ENCODE measurements at regions of chr9 and their contacts with region 1.

Region 1: DNA sequence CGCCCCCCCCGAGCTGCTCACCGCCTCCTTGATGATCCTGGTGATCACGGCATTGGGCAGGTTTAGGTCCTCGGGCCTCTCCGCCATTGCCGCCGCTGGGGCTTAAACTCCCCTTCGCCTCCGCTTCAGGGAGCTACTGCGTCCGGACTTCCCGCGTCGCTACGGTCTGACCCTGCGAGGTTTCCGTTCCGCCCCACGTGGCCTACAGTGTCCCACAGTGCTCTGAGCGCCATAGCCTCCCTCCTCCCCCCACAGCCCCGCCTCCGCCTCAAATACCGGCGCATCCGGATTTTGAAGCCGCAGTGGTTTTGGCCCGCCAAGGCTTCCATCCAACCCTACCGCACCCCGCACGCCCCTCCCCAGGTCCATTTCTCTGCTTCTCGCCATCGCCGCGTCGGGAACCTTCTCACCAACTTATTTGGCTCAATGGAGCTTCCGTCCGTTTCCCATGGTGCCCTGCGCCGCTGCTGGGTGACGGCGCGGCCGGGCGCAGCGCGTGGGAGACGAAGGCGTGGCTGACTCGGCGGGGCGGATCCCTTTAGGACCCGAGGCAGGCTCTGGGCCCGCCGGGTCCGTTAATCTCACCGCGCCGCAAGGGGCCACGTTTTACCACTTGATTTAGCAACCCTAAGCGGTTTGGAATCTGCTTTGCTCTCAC is at the starts of genes C9orf43 and POLE3:
- DNase-seq: peak; percentile 88 to 99 (median 94)
- ATAC-seq: peak; percentile 88 to 89
- H3K4me3 Mint-ChIP-seq: peak within 1 kb of the TSS; percentile 94 to 99 (median 96)
- H3K27ac Mint-ChIP-seq: peak within 1 kb of the TSS; percentile 98 to 100 (median 99)
- H3K4me1 Mint-ChIP-seq: peaks cover 20 to 39% (median 36%) of the 10 kb centered on the region in 4 donors
- H3K27me3 Mint-ChIP-seq: peaks cover 0 to 3% (median 0%) of the 10 kb centered on the region in 5 donors
- polyA plus RNA-seq, gene C9orf43: 0.55 to 0.81 TPM in 2 of 3 donors, not detected in the other
- polyA plus RNA-seq, gene POLE3: 116 to 138 (median 125) TPM

Region 2: GRCh38 chr9:113275157-113276131 is 134.9 kb before region 1 on chr9 and contains the starts of genes CDC26 and PRPF4:
- POLR2A ChIA-PET with region 1: interaction called, 13 read pairs
- DNase-seq: peak; percentile 91 to 98 (median 94)
- ATAC-seq: peak; percentile 87 to 91
- H3K4me3 Mint-ChIP-seq: no peak within 1 kb of the TSS
- H3K27ac Mint-ChIP-seq: no peak within 1 kb of the TSS
- H3K4me1 Mint-ChIP-seq: peaks cover 16 to 42% (median 26%) of the 10 kb centered on the region in 4 donors
- H3K27me3 Mint-ChIP-seq: no peaks in the 10 kb centered on the region
- polyA plus RNA-seq, gene CDC26: 148 to 193 (median 173) TPM
- polyA plus RNA-seq, gene PRPF4: 21.7 to 24.0 (median 23.0) TPM

Region 3: DNA sequence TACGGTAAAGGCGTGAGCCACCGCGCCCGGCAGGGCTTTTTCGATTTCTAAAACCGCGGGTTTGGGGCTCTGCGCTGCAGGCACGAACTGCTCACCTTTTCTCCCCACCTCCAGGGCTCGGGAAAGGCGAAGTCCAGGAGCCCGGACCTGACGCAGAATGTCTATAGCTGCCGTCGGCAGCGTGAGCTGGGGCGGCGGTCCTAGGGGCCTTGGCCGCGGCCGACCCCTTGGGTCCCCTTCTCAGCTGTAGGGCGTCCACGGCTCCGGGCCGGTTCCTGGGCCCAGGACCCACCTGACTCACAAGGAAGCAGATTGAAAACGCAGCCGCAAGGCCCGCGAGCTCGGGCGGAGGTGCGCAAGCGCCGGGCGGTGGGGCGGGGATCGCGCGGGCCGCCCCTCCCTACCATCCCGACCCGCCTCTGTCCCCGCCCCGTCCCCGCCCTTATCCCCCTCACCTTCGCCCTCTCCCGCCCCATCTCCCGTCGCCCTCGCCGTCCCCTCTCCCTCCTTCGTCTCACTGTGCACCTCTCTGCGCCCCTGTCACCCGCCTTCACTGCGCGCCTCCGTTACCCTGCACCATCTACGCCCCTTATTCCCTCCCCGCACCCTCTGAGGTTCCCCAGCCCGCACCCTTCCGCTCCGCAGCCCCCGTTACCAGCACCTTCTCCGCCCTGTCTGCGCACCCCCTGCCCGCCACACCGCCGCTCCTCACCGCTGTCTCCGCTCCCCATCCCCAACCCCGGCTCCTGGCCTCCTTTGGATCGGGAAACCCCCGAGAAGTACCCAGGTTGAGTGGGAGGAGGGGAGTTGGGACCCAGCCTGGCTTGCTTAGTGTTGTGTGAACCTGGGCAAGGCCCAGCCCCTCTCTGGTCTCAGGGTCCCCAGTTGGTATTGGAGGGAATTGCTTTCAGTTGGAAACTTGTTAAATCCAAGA is 33.4 kb before region 1 on chr9 and contains the start of gene HDHD3:
- POLR2A ChIA-PET with region 1: interaction called, 13 read pairs
- DNase-seq: peak; percentile 66 to 87 (median 80)
- ATAC-seq: peak; percentile 87 to 88
- H3K4me3 Mint-ChIP-seq: peak within 1 kb of the TSS; percentile 83 to 96 (median 88)
- H3K27ac Mint-ChIP-seq: peak within 1 kb of the TSS; percentile 29 to 94 (median 90)
- H3K4me1 Mint-ChIP-seq: peaks cover 7 to 22% (median 13%) of the 10 kb centered on the region in 4 donors
- H3K27me3 Mint-ChIP-seq: no peaks in the 10 kb centered on the region
- polyA plus RNA-seq, gene HDHD3: 24.1 to 45.2 (median 35.1) TPM

Region 4: DNA sequence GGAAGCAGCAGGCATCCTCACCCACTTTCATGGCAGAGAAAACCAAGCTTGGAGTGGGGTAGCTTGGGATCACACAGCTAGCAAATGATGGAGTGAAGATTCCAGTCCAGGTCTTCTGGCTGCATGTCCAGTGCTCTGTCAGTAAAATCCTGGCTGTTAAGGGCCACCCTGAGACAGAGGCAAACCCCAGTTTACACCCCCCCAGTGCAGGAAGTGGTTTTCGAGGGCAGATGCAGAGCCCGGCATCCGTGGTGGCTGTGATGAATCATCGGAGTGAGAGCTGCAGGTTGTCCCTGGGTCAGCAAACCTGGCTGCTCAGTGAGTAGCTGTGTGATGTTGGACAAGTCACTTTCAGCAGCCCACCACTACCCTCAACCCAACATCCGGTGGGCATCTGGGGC is 168.5 kb after region 1 on chr9:
- POLR2A ChIA-PET with region 1: interaction called, 28 read pairs
- DNase-seq: peak; percentile 46 to 87 (median 69)
- ATAC-seq: peak; percentile 69
- H3K4me3 Mint-ChIP-seq: peak overlapping the region; percentile 49 to 92 (median 80)
- H3K27ac Mint-ChIP-seq: peak overlapping the region; percentile 87 to 97 (median 95)
- H3K4me1 Mint-ChIP-seq: peaks cover 48 to 88% (median 84%) of the 10 kb centered on the region in 4 donors
- H3K27me3 Mint-ChIP-seq: no peaks in the 10 kb centered on the region